GM13977 (cell line): ENCODE measurements at regions of chr1 and their contacts with region 1.

Region 1: DNA sequence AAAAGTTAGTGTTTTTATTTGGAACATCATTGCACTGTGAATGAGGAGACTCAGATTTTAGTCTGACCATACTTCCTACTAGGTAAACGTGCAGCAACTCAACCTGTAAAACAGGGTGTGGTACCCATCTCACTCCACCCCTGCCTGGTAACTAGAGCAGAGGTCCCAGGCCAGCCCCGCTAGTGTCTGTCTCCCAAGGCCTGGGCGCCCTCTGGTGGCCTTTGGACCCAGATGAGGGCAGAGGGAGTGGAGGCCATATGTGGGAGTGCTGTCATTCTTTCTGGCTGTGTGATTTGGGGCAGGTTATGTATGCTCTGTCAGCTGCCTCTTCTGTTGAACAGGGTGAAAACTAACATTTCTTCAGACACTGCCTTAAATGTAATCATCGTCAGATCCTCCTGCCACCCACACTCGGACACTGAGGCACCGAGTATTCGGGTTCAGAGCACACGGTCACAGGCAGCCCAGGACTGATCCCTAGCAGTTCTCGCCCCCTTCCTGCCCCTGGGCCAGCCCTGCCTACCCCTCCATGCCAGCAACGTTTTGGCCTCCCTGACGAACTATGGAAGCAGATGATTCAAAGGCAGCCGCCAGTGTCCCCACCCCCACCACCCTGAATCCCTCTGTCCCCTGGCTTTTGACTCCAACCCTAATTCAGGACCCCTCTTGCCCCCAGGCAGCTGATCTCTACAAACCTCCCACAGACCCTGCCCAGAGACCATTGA is 76.0 kb downstream of the CD247 start:
- DNase-seq: peak; percentile 87
- CTCF ChIP-seq: peak; percentile 92

Region 2: DNA sequence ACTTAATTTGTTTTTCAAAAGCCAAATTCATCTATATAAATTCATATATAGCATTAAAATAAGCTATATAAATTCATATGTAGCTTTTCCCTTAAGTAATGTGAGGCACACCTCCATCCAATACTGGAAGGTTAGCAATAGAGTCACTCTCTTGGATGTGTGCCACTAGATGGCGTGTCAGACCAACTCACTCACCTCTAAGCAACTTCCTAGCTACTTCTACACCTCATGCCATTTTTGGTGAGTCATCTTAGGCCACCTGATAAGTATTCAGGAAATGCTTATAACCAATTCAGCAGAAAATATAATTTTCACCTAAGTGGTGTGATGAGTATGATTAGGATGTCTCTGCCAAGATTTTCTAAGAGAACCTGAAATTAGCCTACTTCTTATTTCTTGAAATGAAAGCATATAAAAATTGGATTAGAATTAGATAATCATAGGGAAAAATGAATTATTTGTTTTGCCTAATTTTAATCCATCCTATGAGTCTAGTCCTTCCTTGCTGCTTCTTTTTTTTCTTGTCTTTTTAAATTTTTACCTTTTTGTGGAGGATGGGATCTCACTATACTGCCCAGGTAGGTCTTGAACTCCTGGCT is 531.8 kb before region 1 on chr1:
- in situ Hi-C with region 1: loop called (anchors 25 kb)
- DNase-seq: peak; percentile 80
- CTCF ChIP-seq: peak; percentile 73

Region 3: DNA sequence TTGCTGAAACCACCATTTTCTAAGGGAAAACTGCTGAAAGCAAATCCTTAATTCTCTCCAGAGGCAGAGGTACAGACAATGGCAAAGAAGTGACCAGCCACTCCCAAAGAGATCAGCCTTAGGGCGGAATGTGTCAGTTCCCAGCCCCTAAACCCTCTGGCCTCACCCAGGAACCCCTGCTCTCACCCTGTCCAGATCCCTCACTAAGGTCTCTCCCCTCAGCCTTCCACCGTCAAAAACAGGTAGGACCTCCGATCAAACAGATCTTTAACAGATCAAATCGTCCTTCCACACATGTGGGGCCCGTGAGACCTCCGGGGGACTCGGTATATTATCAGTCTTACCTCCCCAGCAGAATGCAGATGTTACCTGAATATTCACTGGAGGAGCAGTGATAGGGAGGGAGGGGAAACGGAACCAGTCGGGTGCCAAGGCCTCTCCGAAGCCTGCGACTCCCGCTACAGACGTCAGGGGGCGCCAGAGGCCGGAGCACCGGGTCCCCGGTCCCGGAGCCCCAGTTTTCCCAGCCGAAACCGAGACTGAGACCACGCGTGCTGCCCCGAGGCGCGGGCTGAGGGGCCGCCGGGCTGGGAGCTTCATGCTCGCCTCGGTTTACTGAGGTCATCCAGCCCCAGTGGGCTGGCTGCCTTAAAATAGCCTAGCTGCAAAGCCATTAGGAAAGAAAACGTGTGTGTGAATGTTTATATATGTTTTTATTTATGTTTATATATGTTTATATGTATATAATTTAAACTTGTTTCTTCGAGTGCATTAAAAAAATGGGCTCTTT is 375.8 kb before region 1 on chr1:
- in situ Hi-C with region 1: loop called (anchors 10 kb)
- DNase-seq: peak; percentile 86
- CTCF ChIP-seq: peak; percentile 94

Region 4: DNA sequence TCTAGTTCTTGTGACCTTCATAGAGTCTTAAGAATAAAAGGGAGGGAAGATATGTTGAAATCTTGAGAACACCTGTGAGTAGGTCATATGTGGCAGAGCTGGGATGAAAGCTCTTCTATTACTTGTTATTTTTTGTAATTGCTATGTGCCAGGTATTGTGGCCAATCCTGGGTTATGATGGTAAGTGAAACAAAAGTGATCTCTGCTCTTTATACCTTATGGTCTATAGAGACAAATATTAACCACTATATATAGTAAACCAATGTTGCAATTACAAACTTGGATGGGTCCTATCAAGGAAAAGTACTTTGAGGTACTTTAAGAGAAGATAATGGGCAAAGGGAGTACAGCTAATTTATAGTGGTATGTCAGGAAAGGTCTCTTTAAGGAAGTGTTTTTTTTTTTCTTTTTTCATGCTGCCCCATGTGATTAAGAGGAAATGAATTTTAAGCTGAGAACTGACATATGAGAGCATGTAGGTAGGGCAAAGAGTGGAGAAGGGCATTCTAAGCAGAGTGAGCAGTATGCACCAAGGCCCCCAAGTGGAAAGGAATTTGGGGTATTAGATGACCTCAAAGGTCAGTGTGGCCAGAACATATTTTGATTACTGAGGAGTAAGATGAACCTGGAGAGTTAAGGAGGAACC is 178.3 kb before region 1 on chr1:
- in situ Hi-C with region 1: loop called (anchors 10 kb)
- DNase-seq: no peak
- CTCF ChIP-seq: no peak

Region 5: DNA sequence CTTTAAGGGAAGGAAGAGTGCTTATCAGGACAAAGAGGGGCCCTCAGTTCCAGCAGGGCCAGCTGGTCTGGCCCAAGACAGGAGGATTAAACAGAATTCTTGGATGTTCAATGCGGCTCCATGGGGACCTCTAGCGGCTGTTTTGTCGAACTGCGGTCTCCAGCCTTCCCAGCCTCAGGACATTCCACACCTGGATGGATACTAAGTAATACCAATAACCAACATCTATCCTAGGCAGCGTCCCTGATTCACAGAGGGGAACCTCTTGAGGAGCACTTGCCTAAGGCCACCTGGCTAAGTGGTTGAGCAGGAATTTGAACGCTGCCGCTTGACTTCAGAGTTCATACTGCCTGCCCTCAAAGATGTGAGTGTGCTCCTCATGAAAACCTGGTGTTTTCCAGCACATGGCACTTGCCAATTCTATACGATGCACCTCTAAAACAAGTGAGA is 91.6 kb after region 1 on chr1:
- in situ Hi-C with region 1: loop called (anchors 10 kb)
- DNase-seq: peak; percentile 71
- CTCF ChIP-seq: peak; percentile 90